ENCODE measurements at regions of chr17 and their contacts with region 1.

Region 1: GRCh38 chr17:28552246-28552999 is at the start of gene UNC119:
- DNase-seq: peak; percentile 85
- ATAC-seq: peak; percentile 66
- H3K4me3 Mint-ChIP-seq: peak within 1 kb of the TSS; percentile 97
- H3K27ac Mint-ChIP-seq: peak within 1 kb of the TSS; percentile 93
- H3K4me1 Mint-ChIP-seq: peaks cover 65% of the 10 kb centered on the region
- H3K27me3 Mint-ChIP-seq: no peaks in the 10 kb centered on the region
- CTCF ChIP-seq: no peak
- total RNA-seq, gene UNC119: 426 and 437 TPM in 2 replicates

Region 2: GRCh38 chr17:28494445-28495188 is 57.8 kb before region 1 on chr17:
- CTCF ChIA-PET with region 1: interaction called, 29 read pairs
- POLR2A ChIA-PET with region 1: interaction called, 10 read pairs
- intact Hi-C with region 1: loop called (anchors 1 kb)
- DNase-seq: peak; percentile 82
- ATAC-seq: peak; percentile 95
- H3K4me3 Mint-ChIP-seq: no peak overlapping the region
- H3K27ac Mint-ChIP-seq: no peak overlapping the region
- H3K4me1 Mint-ChIP-seq: peaks cover 11% of the 10 kb centered on the region
- H3K27me3 Mint-ChIP-seq: peaks cover 2% of the 10 kb centered on the region
- CTCF ChIP-seq: peak; percentile 63

Region 3: GRCh38 chr17:28500712-28501379 is 51.6 kb before region 1 on chr17:
- CTCF ChIA-PET with region 1: interaction called, 29 read pairs
- POLR2A ChIA-PET with region 1: interaction called, 15 read pairs
- intact Hi-C with region 1: no loop called
- DNase-seq: peak; percentile 34
- ATAC-seq: peak; percentile 83
- H3K4me3 Mint-ChIP-seq: peak overlapping the region; percentile 17
- H3K27ac Mint-ChIP-seq: peak overlapping the region; percentile 71
- H3K4me1 Mint-ChIP-seq: peaks cover 24% of the 10 kb centered on the region
- H3K27me3 Mint-ChIP-seq: peaks cover 6% of the 10 kb centered on the region
- CTCF ChIP-seq: no peak

Region 4: DNA sequence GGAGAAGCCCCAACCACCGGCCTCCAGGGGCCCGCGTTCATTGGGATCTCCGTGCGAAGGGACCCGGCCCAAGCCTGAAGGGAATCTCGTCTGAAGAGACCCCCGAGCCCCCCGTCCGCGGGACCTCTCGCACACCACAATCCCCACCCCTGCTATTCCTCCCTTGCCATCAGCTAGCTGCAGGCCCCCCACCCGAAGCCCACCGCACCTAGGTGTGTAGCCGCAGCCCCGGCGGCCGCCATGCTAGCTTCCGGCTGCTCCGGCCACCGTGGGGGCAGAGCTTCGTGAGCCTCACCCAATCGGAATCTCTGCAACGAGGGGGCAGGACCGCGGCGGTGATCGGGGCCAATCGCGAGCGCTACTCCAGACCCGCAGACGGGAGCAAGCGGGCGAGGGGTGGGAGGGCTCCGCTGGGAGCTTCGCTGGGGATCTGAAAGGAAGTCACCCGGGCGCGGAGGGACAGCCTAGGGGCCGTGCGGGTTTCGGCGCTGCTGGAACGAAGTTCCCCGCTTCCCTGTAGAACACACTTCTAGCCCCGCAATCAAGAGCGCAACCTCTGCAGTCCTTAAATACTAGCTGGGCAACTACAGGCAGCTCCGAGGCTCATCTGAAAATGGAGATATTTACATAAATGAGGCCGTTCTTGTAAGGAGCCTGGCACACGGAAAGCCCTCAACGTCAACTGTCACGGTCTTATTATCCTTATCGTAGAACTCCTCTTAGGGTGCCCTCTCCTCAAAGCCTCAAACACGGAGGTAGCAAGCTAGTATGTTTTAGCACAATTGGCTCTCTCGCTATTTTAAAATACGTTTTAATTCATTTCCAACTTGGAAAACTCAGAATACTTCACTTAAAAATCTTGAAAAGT is 19.1 kb after region 1 on chr17 and contains the start of gene PIGS:
- CTCF ChIA-PET with region 1: interaction called, 19 read pairs
- POLR2A ChIA-PET with region 1: interaction called, 160 read pairs
- intact Hi-C with region 1: loop called (anchors 1 kb)
- DNase-seq: peak; percentile 84
- ATAC-seq: peak; percentile 94
- H3K4me3 Mint-ChIP-seq: peak within 1 kb of the TSS; percentile 95
- H3K27ac Mint-ChIP-seq: peak within 1 kb of the TSS; percentile 87
- H3K4me1 Mint-ChIP-seq: peaks cover 62% of the 10 kb centered on the region
- H3K27me3 Mint-ChIP-seq: no peaks in the 10 kb centered on the region
- CTCF ChIP-seq: no peak
- total RNA-seq, gene PIGS: 86.4 and 92.2 TPM in 2 replicates

Region 5: GRCh38 chr17:28576758-28577465 is 24.5 kb after region 1 on chr17 and contains the start of gene ALDOC:
- CTCF ChIA-PET with region 1: interaction called, 19 read pairs
- POLR2A ChIA-PET with region 1: interaction called, 160 read pairs
- intact Hi-C with region 1: loop called (anchors 1 kb)
- DNase-seq: peak; percentile 98
- ATAC-seq: peak; percentile 99
- H3K4me3 Mint-ChIP-seq: peak within 1 kb of the TSS; percentile 79
- H3K27ac Mint-ChIP-seq: peak within 1 kb of the TSS; percentile 92
- H3K4me1 Mint-ChIP-seq: peaks cover 26% of the 10 kb centered on the region
- H3K27me3 Mint-ChIP-seq: no peaks in the 10 kb centered on the region
- CTCF ChIP-seq: no peak
- total RNA-seq, gene ALDOC: 73.4 and 75.0 TPM in 2 replicates

Region 6: DNA sequence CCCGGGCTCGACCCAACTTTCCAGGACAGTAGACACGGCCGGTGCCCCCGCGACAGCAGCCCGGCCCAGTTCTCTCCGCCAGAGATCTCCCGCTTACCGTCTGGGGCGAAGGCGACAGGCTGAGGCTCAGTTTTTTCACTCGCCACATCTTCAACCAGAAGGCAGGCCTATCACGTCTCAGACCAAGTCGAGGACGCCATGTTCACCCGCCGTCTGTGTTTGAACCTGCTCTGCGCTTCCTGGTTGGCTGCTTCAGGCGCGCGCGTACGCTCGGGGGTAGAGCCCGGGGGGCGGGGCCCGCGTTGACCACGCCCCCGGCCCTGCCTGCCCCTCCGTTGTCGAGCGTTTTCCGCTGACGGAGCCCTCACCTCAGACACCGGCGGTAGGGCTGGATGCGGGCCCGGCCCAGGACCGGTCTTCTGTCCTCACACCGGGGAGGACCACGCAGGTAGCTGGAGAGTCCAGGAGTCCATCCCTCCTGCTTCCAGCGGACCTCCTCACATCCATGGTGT is 46.4 kb after region 1 on chr17 and contains the start of gene SPAG5:
- CTCF ChIA-PET with region 1: interaction called, 4 read pairs
- POLR2A ChIA-PET with region 1: interaction called, 80 read pairs
- intact Hi-C with region 1: loop called (anchors 1 kb)
- DNase-seq: peak; percentile 94
- ATAC-seq: peak; percentile 89
- H3K4me3 Mint-ChIP-seq: peak within 1 kb of the TSS; percentile 87
- H3K27ac Mint-ChIP-seq: peak within 1 kb of the TSS; percentile 96
- H3K4me1 Mint-ChIP-seq: peaks cover 24% of the 10 kb centered on the region
- H3K27me3 Mint-ChIP-seq: no peaks in the 10 kb centered on the region
- CTCF ChIP-seq: no peak
- total RNA-seq, gene SPAG5: 14.6 and 15.8 TPM in 2 replicates